Activated CD4-positive, alpha-beta memory T cell treated with anti-CD3 and anti-CD28 coated beads for 36 hours (primary cell): ENCODE measurements at regions of chr2 and their contacts with region 1.

Region 1: DNA sequence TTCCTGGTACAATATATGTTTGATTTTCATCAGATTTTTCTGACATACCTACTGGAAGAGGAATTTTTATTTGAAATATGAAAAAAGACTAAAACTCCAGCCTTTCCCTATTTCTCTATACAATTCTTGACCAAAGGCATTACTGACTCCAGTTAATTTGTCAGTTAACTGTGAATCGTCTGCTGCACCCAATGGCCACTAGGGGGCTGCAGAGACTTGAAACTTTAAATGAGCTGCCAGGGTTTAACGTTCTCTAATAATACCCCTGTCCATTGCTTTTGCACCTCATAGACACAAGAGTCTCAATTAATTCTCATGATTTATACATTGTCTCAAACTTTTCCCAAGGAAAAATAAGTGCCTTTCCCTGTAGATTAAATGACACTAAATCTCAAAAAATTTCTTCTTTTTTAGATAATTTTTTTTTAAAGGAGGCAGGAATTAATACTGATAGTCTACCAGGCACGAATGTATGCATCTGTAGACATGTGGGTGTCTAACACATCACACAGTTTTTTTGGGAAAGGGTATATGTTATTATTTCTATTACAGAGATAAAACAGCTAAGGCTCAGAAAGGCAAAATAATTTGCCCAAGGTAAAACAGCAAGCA is 1.8 kb upstream of the ALK start:
- DNase-seq: peak; percentile 66
- H3K4me3 Mint-ChIP-seq: no peak overlapping the region
- H3K27ac Mint-ChIP-seq: no peak overlapping the region
- H3K4me1 Mint-ChIP-seq: peaks cover 9% of the 10 kb centered on the region
- H3K27me3 Mint-ChIP-seq: peaks cover 50% of the 10 kb centered on the region

Region 2: GRCh38 chr2:30072250-30072842 is 149.1 kb after region 1 on chr2:
- CTCF ChIA-PET with region 1: interaction called, 76 read pairs
- POLR2A ChIA-PET with region 1: no interaction called
- intact Hi-C with region 1: loop called (anchors 1 kb)
- DNase-seq: peak; percentile 76
- H3K4me3 Mint-ChIP-seq: no peak overlapping the region
- H3K27ac Mint-ChIP-seq: no peak overlapping the region
- H3K4me1 Mint-ChIP-seq: no peaks in the 10 kb centered on the region
- H3K27me3 Mint-ChIP-seq: peaks cover 25% of the 10 kb centered on the region

Region 3: GRCh38 chr2:30115141-30115980 is 192.1 kb after region 1 on chr2:
- CTCF ChIA-PET with region 1: interaction called, 5 read pairs
- POLR2A ChIA-PET with region 1: no interaction called
- intact Hi-C with region 1: loop called (anchors 1 kb)
- DNase-seq: peak; percentile 78
- H3K4me3 Mint-ChIP-seq: no peak overlapping the region
- H3K27ac Mint-ChIP-seq: no peak overlapping the region
- H3K4me1 Mint-ChIP-seq: peaks cover 4% of the 10 kb centered on the region
- H3K27me3 Mint-ChIP-seq: peaks cover 2% of the 10 kb centered on the region